HepG2 (cell line): ENCODE measurements at regions of chr7 and their contacts with region 1.

Region 1: GRCh38 chr7:26305463-26306273 is 14.0 kb downstream of the SNX10 start:
- DNase-seq: peak; percentile 83
- ATAC-seq: peak; percentile 79
- H3K4me3 ChIP-seq: peak overlapping the region in 2 of 3 experiments; percentile 15 to 22; a peak in 4 of 6 replicates
- H3K27ac ChIP-seq: peak overlapping the region; percentile 72
- H3K4me1 ChIP-seq: peaks cover 55% of the 10 kb centered on the region
- H3K27me3 ChIP-seq: no peaks in the 10 kb centered on the region
- CTCF ChIP-seq: no peak
- EP300 ChIP-seq: peak in 1 of 2 experiments; percentile 68; a peak in 1 of 4 replicates
- POLR2A ChIP-seq: peak in 1 of 2 experiments; percentile 35; a peak in 1 of 4 replicates
- RAD21 ChIP-seq: no peak

Region 2: GRCh38 chr7:25951031-25951948 is 354.4 kb before region 1 on chr7:
- CTCF ChIA-PET with region 1: no interaction called
- POLR2A ChIA-PET with region 1: no interaction called
- in situ Hi-C with region 1: no loop called
- intact Hi-C with region 1: no loop called
- DNase-seq: peak; percentile 88
- ATAC-seq: peak; percentile 74
- H3K4me3 ChIP-seq: peak overlapping the region; percentile 79 to 89 (median 85)
- H3K27ac ChIP-seq: peak overlapping the region; percentile 88
- H3K4me1 ChIP-seq: peaks cover 40% of the 10 kb centered on the region
- H3K27me3 ChIP-seq: no peaks in the 10 kb centered on the region
- CTCF ChIP-seq: no peak
- EP300 ChIP-seq: no peak
- POLR2A ChIP-seq: peak; percentile 63 to 70
- RAD21 ChIP-seq: peak; percentile 25

Region 3: DNA sequence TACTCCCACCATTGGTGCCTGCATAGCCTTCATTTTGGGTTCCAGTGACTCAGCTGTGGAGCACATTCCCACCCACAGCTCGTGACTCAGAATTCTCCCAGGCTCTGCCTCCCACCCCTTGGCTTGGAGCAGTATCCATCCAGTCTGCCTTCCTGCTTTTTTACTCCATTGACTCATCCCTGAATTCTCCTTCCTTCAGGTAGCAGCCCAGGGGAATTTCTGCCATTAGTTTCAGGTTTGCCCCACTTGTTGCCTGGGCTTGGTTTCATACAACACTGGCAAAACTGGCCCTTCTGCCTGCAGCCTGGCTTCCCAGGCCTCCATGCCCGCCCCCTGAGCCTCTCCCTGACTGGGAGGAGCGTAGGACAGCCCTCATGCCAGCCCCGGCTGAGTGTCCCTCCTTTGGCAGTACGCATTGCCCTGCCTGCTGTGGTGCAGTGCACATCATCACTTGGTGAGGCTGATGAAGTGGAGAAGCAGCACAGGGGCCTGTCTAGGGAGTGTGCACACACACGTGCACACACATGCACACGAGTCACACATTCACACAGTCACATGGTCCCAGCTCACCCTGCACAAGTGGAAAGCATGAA is 41.0 kb after region 1 on chr7:
- CTCF ChIA-PET with region 1: no interaction called
- POLR2A ChIA-PET with region 1: interaction called, 19 read pairs
- in situ Hi-C with region 1: no loop called
- intact Hi-C with region 1: no loop called
- DNase-seq: no peak
- ATAC-seq: no peak
- H3K4me3 ChIP-seq: no peak overlapping the region
- H3K27ac ChIP-seq: peak overlapping the region; percentile 27
- H3K4me1 ChIP-seq: peaks cover 71% of the 10 kb centered on the region
- H3K27me3 ChIP-seq: no peaks in the 10 kb centered on the region; a peak in 1 of 5 replicates
- CTCF ChIP-seq: no peak
- EP300 ChIP-seq: no peak
- POLR2A ChIP-seq: no peak
- RAD21 ChIP-seq: no peak